OCI-LY7 (cell line): ENCODE measurements at regions of chr14 and their contacts with region 1.

Region 1: GRCh38 chr14:65958664-65959562 is 527.3 kb upstream of the CCDC196 start:
- DNase-seq: peak; percentile 60
- H3K4me3 ChIP-seq: no peak overlapping the region
- H3K27ac ChIP-seq: no peak overlapping the region
- H3K4me1 ChIP-seq: peaks cover 5% of the 10 kb centered on the region
- CTCF ChIP-seq: peak; percentile 83

Region 2: DNA sequence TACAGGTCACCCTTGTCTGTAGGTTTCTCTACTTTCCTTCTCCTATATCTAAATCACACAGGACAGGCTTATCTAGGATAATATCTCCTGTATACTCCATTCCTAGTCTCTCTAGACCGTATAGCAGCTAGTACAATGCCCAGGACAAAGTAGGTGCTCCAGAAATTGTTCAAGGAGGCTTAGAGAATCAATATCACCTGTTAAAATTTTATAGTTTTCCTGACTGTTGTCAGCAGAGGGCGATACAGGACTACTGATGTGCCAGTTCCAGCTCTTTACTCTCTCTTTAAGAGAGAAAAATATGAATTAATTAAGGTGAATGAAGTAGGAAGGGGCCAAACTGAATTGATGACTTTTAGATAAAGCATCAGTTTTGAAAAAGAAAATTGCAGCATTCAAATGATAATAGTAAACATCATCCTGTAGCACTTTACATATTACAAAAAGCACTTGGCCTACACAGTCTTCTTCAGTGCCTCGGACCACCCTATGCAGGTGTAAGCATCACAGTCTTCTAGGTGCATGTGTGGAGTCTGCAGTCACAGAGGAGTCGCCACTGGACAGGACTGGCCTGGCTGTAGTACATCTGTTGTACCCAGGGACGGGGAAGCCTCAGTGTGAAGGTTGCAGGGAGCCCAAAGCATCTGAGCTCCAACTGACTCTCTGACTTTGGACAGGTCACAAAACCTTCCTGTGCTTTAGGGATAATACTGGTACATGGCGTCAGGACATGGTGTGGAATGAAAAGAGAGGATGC is 794.7 kb before region 1 on chr14:
- CTCF ChIA-PET with region 1: interaction called, 3 read pairs
- POLR2A ChIA-PET with region 1: no interaction called
- intact Hi-C with region 1: loop called (anchors 1 kb)
- DNase-seq: peak; percentile 79
- H3K4me3 ChIP-seq: no peak overlapping the region
- H3K27ac ChIP-seq: peak overlapping the region; percentile 17
- H3K4me1 ChIP-seq: peaks cover 53% of the 10 kb centered on the region
- CTCF ChIP-seq: peak; percentile 99

Region 3: GRCh38 chr14:65222440-65222858 is 736.5 kb before region 1 on chr14:
- CTCF ChIA-PET with region 1: no interaction called
- POLR2A ChIA-PET with region 1: no interaction called
- intact Hi-C with region 1: loop called (anchors 2 kb)
- DNase-seq: peak; percentile 77
- H3K4me3 ChIP-seq: no peak overlapping the region
- H3K27ac ChIP-seq: no peak overlapping the region
- H3K4me1 ChIP-seq: peaks cover 50% of the 10 kb centered on the region
- CTCF ChIP-seq: peak; percentile 99

Region 4: GRCh38 chr14:65281991-65282895 is 676.7 kb before region 1 on chr14:
- CTCF ChIA-PET with region 1: no interaction called
- POLR2A ChIA-PET with region 1: interaction called, 3 read pairs
- intact Hi-C with region 1: loop called (anchors 10 kb)
- DNase-seq: peak; percentile 58
- H3K4me3 ChIP-seq: peak overlapping the region; percentile 34
- H3K27ac ChIP-seq: peak overlapping the region; percentile 51
- H3K4me1 ChIP-seq: peaks cover 55% of the 10 kb centered on the region
- CTCF ChIP-seq: no peak